Posterior cingulate gyrus (tissue), 11 donors: ENCODE measurements at regions of chr5 and their contacts with region 1.

Region 1: GRCh38 chr5:108681079-108681921 is 66.4 kb upstream of the FER start:
- DNase-seq: no peak

Region 2: DNA sequence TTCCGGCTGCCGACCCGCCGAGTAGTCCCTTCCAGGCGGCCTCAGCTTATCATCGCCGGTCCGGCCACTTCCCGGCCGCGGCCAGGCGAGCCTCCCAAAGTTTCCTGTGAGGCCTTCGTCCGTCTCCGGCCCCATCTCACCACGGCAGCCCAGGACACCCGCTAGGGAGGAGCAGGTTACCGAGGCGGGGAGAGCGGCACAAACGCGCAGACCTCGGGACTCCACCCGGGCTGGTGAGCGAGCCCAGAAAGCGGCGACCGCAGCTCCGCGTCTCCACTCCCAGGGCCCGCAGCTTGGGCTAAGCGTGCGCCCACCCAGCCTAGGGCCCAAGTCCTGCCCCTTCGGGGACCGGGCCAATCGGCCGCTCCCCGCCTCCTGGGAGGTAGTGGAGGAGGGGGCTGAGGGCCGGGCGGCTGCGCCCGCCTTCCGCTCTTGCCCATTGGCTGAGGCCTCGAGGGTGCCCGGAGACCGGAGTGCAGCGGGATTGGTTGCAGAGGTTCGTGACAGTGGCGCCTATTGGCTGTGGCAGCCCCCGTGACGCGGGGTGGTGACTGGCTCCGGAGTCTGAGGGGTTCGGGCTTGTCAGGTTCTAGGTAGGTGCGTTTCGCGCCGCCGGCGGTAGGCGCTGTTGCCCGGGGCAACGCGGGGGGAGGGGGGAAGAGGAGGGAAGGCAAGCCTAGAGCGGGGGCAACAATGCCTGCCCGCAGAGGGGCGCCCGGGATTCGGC is 67.3 kb after region 1 on chr5:
- intact Hi-C with region 1: loop called (anchors 10 kb)
- DNase-seq: peak; percentile 99 to 100 (median 100)

Region 3: DNA sequence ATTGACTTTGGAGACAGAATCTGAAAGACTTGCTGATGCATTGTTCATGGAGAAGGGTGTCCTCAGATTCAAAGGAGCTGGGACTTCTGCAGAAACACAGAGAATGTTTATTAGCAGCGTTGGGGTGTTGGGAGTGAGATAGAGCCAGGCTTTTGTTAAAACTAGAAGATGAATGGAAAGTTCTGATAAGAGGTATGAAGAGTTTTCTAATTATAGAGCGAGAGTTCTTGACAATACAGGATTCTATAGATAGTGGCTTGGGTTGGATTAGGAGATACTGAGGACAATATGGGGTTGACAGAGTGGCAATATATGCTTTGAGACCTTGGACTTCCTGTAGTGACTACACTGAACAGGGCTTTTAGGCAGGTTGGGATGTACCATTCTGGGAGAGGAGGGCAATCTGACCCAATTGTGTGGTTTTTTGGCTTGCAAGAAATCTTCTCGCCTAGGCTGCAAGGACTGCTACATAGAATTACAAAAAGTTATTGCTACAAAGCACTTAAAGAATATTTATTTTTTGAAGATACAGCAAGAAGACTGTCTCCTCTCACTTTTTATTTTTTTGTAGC is 149.5 kb after region 1 on chr5:
- intact Hi-C with region 1: loop called (anchors 10 kb)
- DNase-seq: no peak

Region 4: DNA sequence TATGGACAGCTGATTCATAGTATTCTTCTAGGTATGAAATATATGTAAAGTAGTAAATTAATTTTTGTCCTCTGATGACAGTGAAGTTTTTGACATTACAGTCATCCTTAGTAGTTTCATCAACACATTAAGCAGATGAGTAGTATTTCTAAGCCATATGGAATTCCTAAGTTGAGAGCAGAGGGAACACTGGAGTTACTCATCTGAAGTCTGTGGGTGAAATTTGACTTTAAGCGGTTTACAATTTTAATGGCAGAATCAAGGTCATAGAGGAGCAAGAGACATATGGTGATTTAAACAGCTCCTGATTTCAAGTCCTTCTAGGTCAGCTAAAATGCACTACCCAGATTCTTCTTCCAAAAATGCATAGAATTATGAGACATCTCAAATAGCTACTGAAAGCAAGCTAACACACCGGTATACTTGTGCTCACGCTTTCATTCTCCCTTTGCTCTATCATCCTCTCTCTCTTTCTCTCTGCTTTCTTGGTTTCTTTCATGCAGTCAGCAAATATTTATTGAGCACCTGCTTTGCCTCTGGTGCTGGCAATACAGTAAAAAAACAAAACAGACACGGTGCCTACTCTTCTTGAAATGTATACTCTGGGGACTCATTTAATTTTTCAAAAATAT is 302.3 kb after region 1 on chr5:
- intact Hi-C with region 1: no loop called
- DNase-seq: no peak